CD4-positive, alpha-beta T cell (primary cell): ENCODE measurements at regions of chr12 and their contacts with region 1.

Region 1: GRCh38 chr12:75480469-75480949 is at the start of gene GLIPR1:
- DNase-seq: peak; percentile 46 to 91 (median 66)
- ATAC-seq: peak; percentile 74
- H3K4me3 ChIP-seq: peak within 1 kb of the TSS; percentile 65
- H3K4me3 Mint-ChIP-seq: peak within 1 kb of the TSS; percentile 95
- H3K27ac ChIP-seq: peak within 1 kb of the TSS; percentile 76 to 77
- H3K27ac Mint-ChIP-seq: peak within 1 kb of the TSS; percentile 95
- H3K4me1 ChIP-seq: peaks cover 48% of the 10 kb centered on the region
- H3K4me1 Mint-ChIP-seq: peaks cover 85% of the 10 kb centered on the region
- H3K27me3 ChIP-seq: no peaks in the 10 kb centered on the region
- H3K27me3 Mint-ChIP-seq: no peaks in the 10 kb centered on the region
- CTCF ChIP-seq: no peak
- total RNA-seq, gene GLIPR1: 41.3 to 47.7 TPM

Region 2: GRCh38 chr12:75390899-75391538 is 89.5 kb before region 1 on chr12 and contains the start of gene GLIPR1L2:
- CTCF ChIA-PET with region 1: interaction called, 20 read pairs
- POLR2A ChIA-PET with region 1: interaction called, 31 read pairs
- intact Hi-C with region 1: loop called (anchors 1 to 5 kb)
- DNase-seq: peak; percentile 70 to 96 (median 84)
- ATAC-seq: peak; percentile 81
- H3K4me3 ChIP-seq: peak within 1 kb of the TSS; percentile 77
- H3K4me3 Mint-ChIP-seq: peak within 1 kb of the TSS; percentile 93
- H3K27ac ChIP-seq: peak within 1 kb of the TSS; percentile 64 to 91
- H3K27ac Mint-ChIP-seq: peak within 1 kb of the TSS; percentile 98
- H3K4me1 ChIP-seq: peaks cover 9% of the 10 kb centered on the region
- H3K4me1 Mint-ChIP-seq: peaks cover 63% of the 10 kb centered on the region
- H3K27me3 ChIP-seq: no peaks in the 10 kb centered on the region
- H3K27me3 Mint-ChIP-seq: no peaks in the 10 kb centered on the region
- CTCF ChIP-seq: peak; percentile 66
- total RNA-seq, gene GLIPR1L2: 0.44 to 0.56 TPM

Region 3: GRCh38 chr12:75455831-75456230 is 24.7 kb before region 1 on chr12:
- CTCF ChIA-PET with region 1: interaction called, 8 read pairs
- POLR2A ChIA-PET with region 1: interaction called, 16 read pairs
- intact Hi-C with region 1: loop called in 1 of 2 experiments (anchors 2 kb)
- DNase-seq: no peak
- ATAC-seq: no peak
- H3K4me3 ChIP-seq: no peak overlapping the region
- H3K4me3 Mint-ChIP-seq: no peak overlapping the region
- H3K27ac ChIP-seq: no peak overlapping the region
- H3K27ac Mint-ChIP-seq: no peak overlapping the region
- H3K4me1 ChIP-seq: peaks cover 19% of the 10 kb centered on the region
- H3K4me1 Mint-ChIP-seq: peaks cover 40% of the 10 kb centered on the region
- H3K27me3 ChIP-seq: no peaks in the 10 kb centered on the region
- H3K27me3 Mint-ChIP-seq: no peaks in the 10 kb centered on the region
- CTCF ChIP-seq: no peak

Region 4: DNA sequence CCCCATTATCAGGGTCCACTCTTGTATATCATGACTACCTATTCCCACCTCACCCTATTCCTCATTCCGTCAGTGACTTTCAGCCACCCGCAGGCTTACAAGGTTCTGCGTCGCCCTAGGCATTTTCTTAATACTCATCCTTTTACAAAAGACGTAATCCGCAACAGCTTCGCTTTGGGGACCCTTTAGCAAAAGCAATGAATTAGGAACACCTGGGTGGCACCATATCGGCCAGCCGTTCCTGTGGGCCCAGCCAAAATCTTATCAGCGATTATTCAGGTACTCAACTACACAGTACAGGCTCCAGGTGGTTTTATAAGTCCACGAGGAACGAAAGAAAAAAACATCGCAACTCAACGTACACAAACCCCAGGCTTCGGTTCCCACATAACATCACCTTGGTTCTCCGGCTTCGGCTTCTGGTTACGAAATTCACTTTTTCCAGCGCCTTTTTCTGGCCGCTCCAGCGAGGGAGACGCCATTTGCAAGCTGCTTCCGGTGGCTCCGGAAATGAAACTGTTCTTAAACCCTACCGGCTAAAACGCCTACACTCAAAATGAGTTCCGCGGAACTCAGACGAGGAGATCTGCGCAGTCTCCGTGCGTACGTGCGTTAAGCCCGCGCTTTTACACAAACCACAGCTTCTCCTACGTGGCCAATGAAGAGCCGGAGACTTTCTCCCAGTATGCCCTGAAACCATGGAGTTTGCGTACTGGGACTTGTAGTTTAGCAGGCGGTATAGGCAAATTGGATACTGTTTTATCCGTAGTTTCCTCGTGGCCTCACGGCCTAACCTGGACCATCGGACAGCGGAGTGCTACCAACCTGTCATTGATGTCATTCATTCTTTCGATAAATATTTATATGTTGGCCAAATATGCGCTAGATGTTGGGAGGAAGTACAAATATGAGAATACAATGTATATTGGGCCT is 30.9 kb after region 1 on chr12 and contains the start of gene KRR1:
- CTCF ChIA-PET with region 1: interaction called, 11 read pairs
- POLR2A ChIA-PET with region 1: interaction called, 27 read pairs
- intact Hi-C with region 1: loop called (anchors 2 kb)
- DNase-seq: peak; percentile 74 to 98 (median 85)
- ATAC-seq: peak; percentile 97
- H3K4me3 ChIP-seq: peak within 1 kb of the TSS; percentile 81
- H3K4me3 Mint-ChIP-seq: peak within 1 kb of the TSS; percentile 99
- H3K27ac ChIP-seq: peak within 1 kb of the TSS; percentile 81 to 92
- H3K27ac Mint-ChIP-seq: peak within 1 kb of the TSS; percentile 95
- H3K4me1 ChIP-seq: peaks cover 8% of the 10 kb centered on the region
- H3K4me1 Mint-ChIP-seq: peaks cover 38% of the 10 kb centered on the region
- H3K27me3 ChIP-seq: no peaks in the 10 kb centered on the region
- H3K27me3 Mint-ChIP-seq: no peaks in the 10 kb centered on the region
- CTCF ChIP-seq: no peak
- total RNA-seq, gene KRR1: 144 to 148 TPM

Region 5: GRCh38 chr12:76031537-76032073 is 551.1 kb after region 1 on chr12 and contains the start of gene PHLDA1:
- CTCF ChIA-PET with region 1: interaction called, 4 read pairs
- POLR2A ChIA-PET with region 1: interaction called, 19 read pairs
- intact Hi-C with region 1: loop called in 1 of 2 experiments (anchors 5 kb)
- DNase-seq: peak; percentile 79 to 97 (median 84)
- ATAC-seq: peak; percentile 83
- H3K4me3 ChIP-seq: peak within 1 kb of the TSS; percentile 92
- H3K4me3 Mint-ChIP-seq: peak within 1 kb of the TSS; percentile 88
- H3K27ac ChIP-seq: peak within 1 kb of the TSS; percentile 69 to 88
- H3K27ac Mint-ChIP-seq: peak within 1 kb of the TSS; percentile 87
- H3K4me1 ChIP-seq: peaks cover 26% of the 10 kb centered on the region
- H3K4me1 Mint-ChIP-seq: peaks cover 43% of the 10 kb centered on the region
- H3K27me3 ChIP-seq: no peaks in the 10 kb centered on the region
- H3K27me3 Mint-ChIP-seq: no peaks in the 10 kb centered on the region
- CTCF ChIP-seq: peak; percentile 55
- total RNA-seq, gene PHLDA1: 6.5 TPM